Dendritic cell treated with granulocyte-macrophage colony-stimulating factor and Interleukin-4, amounts not matched to agents 40 ng/mL and 50 ng/mL, for 4 days (primary cell): ENCODE measurements at regions of chrX and their contacts with region 1.

Region 1: DNA sequence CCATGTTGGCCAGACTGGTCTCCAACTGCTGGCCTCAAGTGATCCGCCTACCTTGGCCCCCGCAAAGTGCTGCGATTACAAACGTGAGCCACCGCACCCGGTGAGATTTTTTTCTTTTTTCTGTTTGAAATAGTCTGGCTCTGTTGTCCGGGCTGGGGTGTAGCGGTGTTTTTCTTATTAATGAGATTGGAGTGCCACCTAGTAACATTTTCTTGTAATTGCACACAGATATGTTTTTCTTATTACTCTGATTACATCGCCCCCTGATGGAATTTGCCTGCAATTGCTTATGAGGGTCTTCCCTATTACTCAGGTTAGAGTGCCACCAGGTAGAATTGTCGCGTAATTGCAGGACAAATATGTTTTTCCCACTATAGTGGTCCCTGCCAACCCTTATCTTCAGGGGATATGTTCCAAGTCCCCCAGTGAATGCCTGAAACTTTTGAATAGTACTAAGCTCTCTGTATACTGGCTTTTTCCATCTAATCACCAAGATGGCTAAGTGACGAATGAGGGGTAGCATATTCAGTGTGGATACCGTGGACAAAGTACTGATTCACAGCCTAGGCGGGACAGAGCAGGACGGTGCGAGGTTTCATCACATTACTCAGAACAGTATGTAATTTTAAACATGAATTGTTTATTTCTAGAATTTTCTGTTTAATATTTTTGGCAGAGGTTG is 8.6 kb upstream of the PDHA1 start:
- H3K4me3 Mint-ChIP-seq: no peak overlapping the region
- H3K27ac Mint-ChIP-seq: no peak overlapping the region
- H3K4me1 Mint-ChIP-seq: no peaks in the 10 kb centered on the region
- H3K27me3 Mint-ChIP-seq: peaks cover 5% of the 10 kb centered on the region

Region 2: DNA sequence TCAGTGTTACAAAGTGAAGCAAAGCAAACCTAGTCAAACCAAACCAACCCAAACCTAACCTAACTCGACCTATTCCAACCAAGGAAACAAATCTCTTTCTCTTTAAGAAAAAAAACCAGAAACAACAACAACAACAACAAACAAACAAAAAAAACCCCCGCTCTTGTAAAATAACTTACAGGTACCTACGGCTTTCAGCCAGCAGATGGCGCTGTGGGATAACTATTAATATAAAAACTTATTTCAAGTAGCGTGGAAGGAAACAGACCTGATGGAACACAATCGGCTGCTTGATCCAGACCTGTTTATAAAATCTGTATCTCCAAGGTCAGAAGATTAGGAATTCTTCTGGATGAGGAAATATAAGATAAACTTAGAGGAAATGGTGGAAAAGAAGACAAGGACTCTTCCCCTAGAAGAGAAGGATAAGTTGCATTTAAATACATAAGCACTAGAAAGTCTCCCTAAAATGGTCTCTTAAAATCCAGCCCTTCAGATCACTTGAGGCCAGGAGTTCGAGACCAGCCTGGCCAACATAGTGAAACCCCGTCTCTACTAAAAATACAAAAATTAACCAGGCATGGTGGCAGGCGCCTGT is 944.0 kb before region 1 on chrX:
- intact Hi-C with region 1: loop called (anchors 1 kb)
- H3K4me3 Mint-ChIP-seq: no peak overlapping the region
- H3K27ac Mint-ChIP-seq: no peak overlapping the region
- H3K4me1 Mint-ChIP-seq: no peaks in the 10 kb centered on the region
- H3K27me3 Mint-ChIP-seq: no peaks in the 10 kb centered on the region

Region 3: DNA sequence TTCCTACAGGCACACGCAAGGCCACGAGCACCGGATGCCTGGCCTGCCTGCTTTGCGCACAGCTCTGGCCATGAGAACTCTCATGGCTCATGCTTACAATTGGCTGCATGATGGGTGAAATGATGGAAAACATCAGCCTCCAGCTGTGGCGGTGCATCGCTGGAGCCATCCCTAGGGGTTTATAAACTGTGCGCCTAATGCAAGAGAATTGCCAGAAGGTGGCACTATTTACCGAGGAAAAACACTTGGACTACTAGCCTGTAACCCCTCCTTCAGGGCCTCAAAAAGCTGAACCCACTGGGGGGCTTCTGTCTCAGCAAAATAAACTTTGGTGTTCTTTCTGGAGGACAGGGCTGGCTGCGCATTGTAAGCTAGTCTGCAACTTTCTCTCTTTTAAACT is 403.1 kb before region 1 on chrX:
- intact Hi-C with region 1: loop called (anchors 5 kb)
- H3K4me3 Mint-ChIP-seq: no peak overlapping the region
- H3K27ac Mint-ChIP-seq: no peak overlapping the region
- H3K4me1 Mint-ChIP-seq: no peaks in the 10 kb centered on the region
- H3K27me3 Mint-ChIP-seq: no peaks in the 10 kb centered on the region